ENCODE measurements at regions of chr3 and their contacts with region 1.

Region 1: DNA sequence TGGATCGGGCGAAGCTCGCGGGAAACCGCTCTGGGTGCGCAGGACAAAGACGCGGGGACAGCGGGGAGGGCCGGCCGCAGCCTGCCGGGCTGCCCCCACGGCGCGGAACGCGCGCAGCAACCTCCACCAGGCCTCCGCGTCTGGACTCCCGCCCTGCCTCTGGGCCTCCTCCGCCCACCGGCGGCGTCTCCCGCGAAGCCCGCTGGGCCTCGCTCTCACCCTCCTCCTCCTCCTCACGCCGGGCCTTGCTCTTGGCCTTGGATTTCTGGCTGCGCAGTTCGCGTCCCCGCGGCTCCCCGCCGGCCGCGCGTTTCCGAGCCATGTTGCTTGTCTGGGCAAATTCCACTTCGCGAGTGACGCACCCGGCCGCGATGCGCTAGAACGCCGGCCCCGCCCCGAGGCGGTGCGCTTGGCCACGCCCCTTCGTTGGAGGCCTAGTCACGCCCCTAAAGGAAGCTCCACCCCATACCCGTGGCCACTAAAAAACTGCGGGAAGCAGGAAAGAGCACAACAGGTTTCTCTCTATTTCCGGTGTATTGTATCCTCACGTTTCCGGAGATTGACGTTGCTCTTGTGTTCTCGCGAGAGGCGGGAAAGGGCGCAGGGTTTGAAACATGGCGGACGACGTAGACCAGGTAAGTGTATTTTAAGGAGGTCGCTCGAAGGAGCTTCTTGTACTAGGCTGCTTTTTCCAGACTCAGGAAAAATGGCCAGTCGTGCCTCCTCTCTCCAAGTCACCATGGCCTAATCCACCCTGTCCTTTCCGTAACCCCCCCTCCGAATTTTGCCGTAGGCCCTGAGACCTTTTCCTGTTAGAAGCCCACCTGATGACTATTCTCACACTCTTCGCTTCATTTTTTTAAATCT is at the starts of genes LSM3 and XPC:
- DNase-seq: peak; percentile 98 to 100 (median 99)
- ATAC-seq: peak; percentile 98
- H3K4me3 ChIP-seq: peak within 1 kb of the TSS; percentile 68
- H3K4me3 Mint-ChIP-seq: peak within 1 kb of the TSS; percentile 94 to 100 (median 98)
- H3K27ac ChIP-seq: peak within 1 kb of the TSS; percentile 99
- H3K27ac Mint-ChIP-seq: peak within 1 kb of the TSS; percentile 96 to 100 (median 99)
- H3K4me1 ChIP-seq: peaks cover 37 to 48% of the 10 kb centered on the region in 2 donors
- H3K4me1 Mint-ChIP-seq: peaks cover 45 to 85% (median 82%) of the 10 kb centered on the region in 7 donors
- H3K27me3 ChIP-seq: no peaks in the 10 kb centered on the region
- H3K27me3 Mint-ChIP-seq: peaks cover 0 to 2% (median 0%) of the 10 kb centered on the region in 5 donors
- total RNA-seq, gene LSM3: 6.0 to 14.1 (median 8.0) TPM
- total RNA-seq, gene XPC: 56.3 to 94.8 (median 78.1) TPM

Region 2: DNA sequence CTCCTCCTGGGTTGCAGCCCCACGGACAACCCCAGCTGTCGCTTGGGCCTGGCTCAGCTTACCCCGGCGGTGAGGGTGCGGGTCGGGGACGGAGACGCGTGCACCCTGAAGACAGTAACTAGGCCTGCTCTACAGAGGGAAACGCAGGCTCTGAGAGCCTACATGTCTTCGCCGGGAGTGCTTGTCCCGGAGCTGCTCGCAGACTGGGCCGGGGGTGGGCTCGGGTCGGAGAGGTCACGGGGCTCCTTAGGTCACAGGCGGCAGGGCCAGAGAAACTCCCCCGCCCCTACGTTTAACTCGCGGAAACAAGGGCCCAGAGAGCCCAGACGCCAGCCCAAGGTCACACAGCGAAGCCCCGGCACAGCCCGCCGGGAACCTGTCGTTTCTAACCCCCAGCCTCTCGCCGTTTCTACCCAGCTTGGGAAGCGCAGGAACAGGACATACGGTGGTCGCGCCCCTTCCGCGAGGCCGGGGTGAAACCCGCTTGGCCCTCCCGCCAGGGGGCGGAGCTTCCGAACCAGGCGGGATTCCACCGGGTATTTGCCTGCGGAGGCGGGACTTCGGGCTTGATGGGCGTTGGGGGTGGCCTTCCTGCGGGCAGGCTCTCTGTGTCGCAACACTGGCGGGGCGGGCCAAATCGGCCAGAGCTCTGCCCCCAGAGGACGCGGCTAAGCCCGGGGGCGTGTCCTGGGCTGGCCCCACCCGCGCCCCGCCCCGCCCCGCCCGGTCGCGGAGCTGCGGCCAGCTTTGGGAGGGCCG is 698.7 kb before region 1 on chr3 and contains the start of gene HDAC11:
- CTCF ChIA-PET with region 1: no interaction called
- POLR2A ChIA-PET with region 1: interaction called, 3 read pairs
- intact Hi-C with region 1: loop called (anchors 1 kb)
- DNase-seq: peak; percentile 93 to 98 (median 95)
- ATAC-seq: peak; percentile 98
- H3K4me3 ChIP-seq: peak within 1 kb of the TSS; percentile 97
- H3K4me3 Mint-ChIP-seq: peak within 1 kb of the TSS; percentile 90 to 97 (median 94)
- H3K27ac ChIP-seq: peak within 1 kb of the TSS; percentile 98
- H3K27ac Mint-ChIP-seq: peak within 1 kb of the TSS; percentile 82 to 97 (median 94)
- H3K4me1 ChIP-seq: peaks cover 8 to 15% of the 10 kb centered on the region in 2 donors
- H3K4me1 Mint-ChIP-seq: peaks cover 4 to 22% (median 15%) of the 10 kb centered on the region in 7 donors
- H3K27me3 ChIP-seq: no peaks in the 10 kb centered on the region
- H3K27me3 Mint-ChIP-seq: peaks cover 0 to 13% (median 0%) of the 10 kb centered on the region in 5 donors
- total RNA-seq, gene HDAC11: 1.2 to 8.0 (median 7.3) TPM

Region 3: GRCh38 chr3:14144423-14145075 is 33.9 kb before region 1 on chr3:
- CTCF ChIA-PET with region 1: interaction called, 3 read pairs
- POLR2A ChIA-PET with region 1: interaction called, 36 read pairs
- intact Hi-C with region 1: loop called (anchors 1 kb)
- DNase-seq: peak; percentile 45 to 93 (median 84)
- ATAC-seq: peak; percentile 75
- H3K4me3 ChIP-seq: peak overlapping the region; percentile 10
- H3K4me3 Mint-ChIP-seq: peak overlapping the region; percentile 53 to 76 (median 66)
- H3K27ac ChIP-seq: peak overlapping the region; percentile 79
- H3K27ac Mint-ChIP-seq: peak overlapping the region; percentile 89 to 100 (median 98)
- H3K4me1 ChIP-seq: peaks cover 50 to 52% of the 10 kb centered on the region in 2 donors
- H3K4me1 Mint-ChIP-seq: peaks cover 34 to 62% (median 56%) of the 10 kb centered on the region in 7 donors
- H3K27me3 ChIP-seq: no peaks in the 10 kb centered on the region
- H3K27me3 Mint-ChIP-seq: no peaks in the 10 kb centered on the region

Region 4: GRCh38 chr3:14166877-14167603 is 11.4 kb before region 1 on chr3:
- CTCF ChIA-PET with region 1: no interaction called
- POLR2A ChIA-PET with region 1: interaction called, 12 read pairs
- intact Hi-C with region 1: loop called in 1 of 2 experiments (anchors 1 kb)
- DNase-seq: no peak
- ATAC-seq: no peak
- H3K4me3 ChIP-seq: no peak overlapping the region
- H3K4me3 Mint-ChIP-seq: no peak overlapping the region
- H3K27ac ChIP-seq: no peak overlapping the region
- H3K27ac Mint-ChIP-seq: peak overlapping the region in 1 of 9 donors; percentile 49
- H3K4me1 ChIP-seq: peaks cover 0 to 1% of the 10 kb centered on the region in 2 donors
- H3K4me1 Mint-ChIP-seq: peaks cover 16 to 52% (median 33%) of the 10 kb centered on the region in 7 donors
- H3K27me3 ChIP-seq: no peaks in the 10 kb centered on the region
- H3K27me3 Mint-ChIP-seq: no peaks in the 10 kb centered on the region

Region 5: DNA sequence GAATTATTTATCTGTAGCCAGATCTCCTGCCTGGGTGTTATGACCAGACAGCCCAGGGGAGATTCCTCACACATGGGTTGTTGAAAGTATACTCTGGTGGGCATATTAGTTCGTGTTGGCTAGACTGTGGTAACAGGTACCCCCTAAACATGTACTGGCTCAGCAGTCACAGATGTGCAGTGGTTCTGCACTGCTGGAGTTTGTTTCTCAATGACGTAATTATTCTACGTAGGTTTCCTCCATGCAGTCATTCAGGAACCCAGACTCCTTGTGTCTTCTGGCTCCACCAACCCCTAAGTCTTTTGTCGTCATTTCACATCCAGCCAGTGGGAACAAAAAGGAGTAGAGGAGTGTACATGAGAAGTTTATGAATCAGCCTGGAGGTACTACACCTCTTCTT is 16.4 kb after region 1 on chr3:
- CTCF ChIA-PET with region 1: no interaction called
- POLR2A ChIA-PET with region 1: no interaction called
- intact Hi-C with region 1: no loop called
- DNase-seq: no peak
- ATAC-seq: no peak
- H3K4me3 ChIP-seq: no peak overlapping the region
- H3K4me3 Mint-ChIP-seq: no peak overlapping the region
- H3K27ac ChIP-seq: no peak overlapping the region
- H3K27ac Mint-ChIP-seq: peak overlapping the region in 1 of 9 donors; percentile 51
- H3K4me1 ChIP-seq: no peaks in the 10 kb centered on the region
- H3K4me1 Mint-ChIP-seq: peaks cover 28 to 42% (median 39%) of the 10 kb centered on the region in 7 donors
- H3K27me3 ChIP-seq: no peaks in the 10 kb centered on the region
- H3K27me3 Mint-ChIP-seq: no peaks in the 10 kb centered on the region

Region 6: GRCh38 chr3:14651440-14652251 is 473.2 kb after region 1 on chr3 and contains the start of gene CCDC174:
- CTCF ChIA-PET with region 1: no interaction called
- POLR2A ChIA-PET with region 1: interaction called, 34 read pairs
- intact Hi-C with region 1: loop called (anchors 1 kb)
- DNase-seq: peak; percentile 84 to 98 (median 96)
- ATAC-seq: peak; percentile 99
- H3K4me3 ChIP-seq: peak within 1 kb of the TSS; percentile 90
- H3K4me3 Mint-ChIP-seq: peak within 1 kb of the TSS; percentile 84 to 100 (median 96)
- H3K27ac ChIP-seq: peak within 1 kb of the TSS; percentile 94
- H3K27ac Mint-ChIP-seq: peak within 1 kb of the TSS; percentile 92 to 100 (median 98)
- H3K4me1 ChIP-seq: peaks cover 21 to 25% of the 10 kb centered on the region in 2 donors
- H3K4me1 Mint-ChIP-seq: peaks cover 25 to 80% (median 66%) of the 10 kb centered on the region in 7 donors
- H3K27me3 ChIP-seq: no peaks in the 10 kb centered on the region
- H3K27me3 Mint-ChIP-seq: peaks cover 0 to 2% (median 0%) of the 10 kb centered on the region in 5 donors
- total RNA-seq, gene CCDC174: 21.6 to 59.2 (median 46.2) TPM

Region 7: DNA sequence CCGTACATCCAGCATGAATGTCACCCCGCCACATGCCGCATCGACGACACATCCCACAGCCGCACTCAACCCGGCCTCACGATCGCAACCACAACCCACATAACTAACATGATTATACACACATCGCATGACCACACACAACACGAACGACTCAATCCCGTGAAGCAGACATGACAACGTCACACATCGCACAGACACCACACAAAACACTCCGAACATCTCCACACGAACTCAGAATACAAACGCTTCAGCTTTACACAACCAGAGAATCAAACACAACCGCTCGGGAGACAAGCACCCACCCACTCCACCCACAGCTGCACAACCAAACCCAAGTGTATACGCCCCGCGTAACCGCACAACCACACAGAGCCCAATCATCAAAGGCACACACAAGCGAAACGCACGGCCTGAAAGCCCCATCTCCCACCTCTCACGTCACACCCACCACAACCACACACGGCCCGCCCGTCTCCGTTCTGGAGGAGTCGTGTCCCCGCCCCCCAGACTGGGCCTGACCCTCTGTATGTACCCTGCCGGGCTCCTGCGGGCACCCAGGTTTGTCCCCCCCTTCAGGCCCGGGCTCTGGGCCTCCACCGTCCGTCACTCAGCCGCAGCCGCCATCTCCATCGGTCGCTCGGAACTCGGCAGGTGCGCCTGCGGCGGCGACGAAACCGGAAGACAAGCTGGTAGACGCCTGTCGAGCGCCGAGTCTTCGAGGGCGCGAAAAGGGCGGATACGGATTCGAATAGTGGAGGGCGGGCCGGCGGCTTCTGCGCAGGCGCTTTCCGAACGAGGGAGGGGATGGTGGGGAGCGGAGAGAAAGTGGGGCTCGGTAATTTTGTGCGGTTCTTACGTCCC is 920.3 kb after region 1 on chr3 and contains the start of gene RBSN:
- CTCF ChIA-PET with region 1: no interaction called
- POLR2A ChIA-PET with region 1: interaction called, 4 read pairs
- intact Hi-C with region 1: loop called (anchors 1 kb)
- DNase-seq: peak; percentile 87 to 96 (median 94)
- ATAC-seq: peak; percentile 87
- H3K4me3 ChIP-seq: peak within 1 kb of the TSS; percentile 83
- H3K4me3 Mint-ChIP-seq: peak within 1 kb of the TSS; percentile 90 to 99 (median 96)
- H3K27ac ChIP-seq: peak within 1 kb of the TSS; percentile 96
- H3K27ac Mint-ChIP-seq: peak within 1 kb of the TSS; percentile 90 to 99 (median 98)
- H3K4me1 ChIP-seq: peaks cover 8 to 14% of the 10 kb centered on the region in 2 donors
- H3K4me1 Mint-ChIP-seq: peaks cover 21 to 42% (median 30%) of the 10 kb centered on the region in 7 donors
- H3K27me3 ChIP-seq: no peaks in the 10 kb centered on the region
- H3K27me3 Mint-ChIP-seq: peaks cover 0 to 9% (median 2%) of the 10 kb centered on the region in 5 donors
- total RNA-seq, gene RBSN: 20.5 to 54.4 (median 39.6) TPM